Activated naive CD4-positive, alpha-beta T cell treated with anti-CD3 and anti-CD28 coated beads for 36 hours (primary cell): ENCODE measurements at regions of chr10 and their contacts with region 1.

Region 1: GRCh38 chr10:113678690-113679462 is 836 bp upstream of the CASP7 start:
- DNase-seq: peak; percentile 84
- H3K4me3 Mint-ChIP-seq: peak overlapping the region; percentile 83
- H3K27ac Mint-ChIP-seq: peak overlapping the region; percentile 68
- H3K4me1 Mint-ChIP-seq: peaks cover 39% of the 10 kb centered on the region
- H3K27me3 Mint-ChIP-seq: peaks cover 3% of the 10 kb centered on the region

Region 2: DNA sequence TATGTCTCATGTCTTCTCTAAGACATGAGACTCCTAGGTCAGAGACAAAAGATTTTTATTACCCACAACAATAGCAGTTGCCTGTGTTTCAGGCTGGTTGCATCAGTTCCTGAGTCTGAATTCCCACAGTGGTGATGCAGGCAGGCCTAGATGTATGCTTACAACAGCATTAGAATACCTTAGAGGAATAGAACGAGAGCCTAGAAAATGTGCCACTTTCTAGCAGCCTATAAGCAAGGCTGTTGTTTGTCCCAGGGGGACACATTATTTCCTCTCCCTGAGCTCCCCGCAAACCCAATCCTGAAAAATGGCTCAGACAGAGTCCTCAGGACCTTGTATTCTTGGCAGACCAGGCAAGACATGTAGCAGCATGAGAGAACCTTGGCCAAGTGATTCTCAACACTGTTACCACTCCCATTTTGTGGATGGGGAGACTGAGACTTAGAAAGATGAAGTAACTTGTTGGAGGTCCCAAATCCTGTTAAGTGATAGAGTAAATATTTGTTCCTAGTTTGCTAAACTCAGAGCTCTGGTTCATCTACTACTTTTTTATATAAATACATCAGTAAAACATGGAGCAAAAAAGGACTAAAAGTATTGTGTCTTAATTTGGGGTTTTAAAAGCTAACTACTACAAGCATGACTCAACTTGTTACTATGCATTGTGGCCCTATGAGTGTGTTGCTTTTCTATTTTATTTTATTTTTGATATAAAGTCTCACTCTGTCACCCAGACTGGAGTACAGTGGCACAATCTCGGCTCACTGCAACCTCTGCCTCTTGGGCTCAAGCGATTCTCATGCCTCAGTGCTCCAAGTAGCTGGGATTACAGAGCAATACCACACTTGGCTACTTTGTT is 1217.6 kb before region 1 on chr10:
- CTCF ChIA-PET with region 1: no interaction called
- intact Hi-C with region 1: loop called (anchors 5 kb)
- DNase-seq: peak; percentile 90
- H3K4me3 Mint-ChIP-seq: no peak overlapping the region
- H3K27ac Mint-ChIP-seq: peak overlapping the region; percentile 95
- H3K4me1 Mint-ChIP-seq: peaks cover 23% of the 10 kb centered on the region
- H3K27me3 Mint-ChIP-seq: no peaks in the 10 kb centered on the region

Region 3: GRCh38 chr10:112981553-112981952 is 697.3 kb before region 1 on chr10:
- CTCF ChIA-PET with region 1: no interaction called
- intact Hi-C with region 1: loop called (anchors 10 kb)
- DNase-seq: peak; percentile 73
- H3K4me3 Mint-ChIP-seq: no peak overlapping the region
- H3K27ac Mint-ChIP-seq: no peak overlapping the region
- H3K4me1 Mint-ChIP-seq: peaks cover 24% of the 10 kb centered on the region
- H3K27me3 Mint-ChIP-seq: peaks cover 61% of the 10 kb centered on the region

Region 4: GRCh38 chr10:113846036-113846435 is 167.2 kb after region 1 on chr10:
- CTCF ChIA-PET with region 1: no interaction called
- intact Hi-C with region 1: no loop called
- DNase-seq: no peak
- H3K4me3 Mint-ChIP-seq: no peak overlapping the region
- H3K27ac Mint-ChIP-seq: peak overlapping the region; percentile 14
- H3K4me1 Mint-ChIP-seq: peaks cover 15% of the 10 kb centered on the region
- H3K27me3 Mint-ChIP-seq: no peaks in the 10 kb centered on the region

Region 5: DNA sequence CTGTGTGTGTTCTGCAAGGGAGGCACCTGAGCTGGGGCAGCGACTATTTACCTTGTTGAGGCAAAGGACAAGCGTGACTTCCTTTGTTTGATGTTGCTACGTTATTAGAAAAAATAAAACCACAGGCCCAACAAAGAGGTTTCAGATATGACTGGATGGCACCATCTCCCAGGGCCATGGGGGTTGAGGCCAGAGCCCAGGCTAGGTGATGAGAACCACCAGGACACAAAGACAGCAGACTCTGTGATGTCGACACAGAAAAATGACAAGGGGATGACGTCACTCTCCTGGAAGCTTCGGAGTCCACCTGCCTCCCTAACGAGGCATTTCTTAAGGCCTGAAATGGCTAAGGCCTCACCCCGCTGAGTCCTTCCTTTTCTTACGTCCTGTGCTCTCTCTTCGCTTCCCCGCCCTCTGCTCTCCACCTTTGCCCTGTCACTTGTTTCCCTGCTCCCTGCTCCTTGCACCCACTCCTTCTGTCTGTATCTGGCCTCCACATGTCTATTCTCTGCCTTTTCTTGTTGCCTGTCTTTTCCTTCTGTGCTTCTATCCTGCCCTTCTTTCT is 281.8 kb after region 1 on chr10:
- CTCF ChIA-PET with region 1: interaction called, 4 read pairs
- intact Hi-C with region 1: loop called (anchors 1 kb)
- DNase-seq: peak; percentile 39
- H3K4me3 Mint-ChIP-seq: no peak overlapping the region
- H3K27ac Mint-ChIP-seq: no peak overlapping the region
- H3K4me1 Mint-ChIP-seq: peaks cover 37% of the 10 kb centered on the region
- H3K27me3 Mint-ChIP-seq: peaks cover 7% of the 10 kb centered on the region

Region 6: GRCh38 chr10:114083040-114083439 is 404.2 kb after region 1 on chr10:
- CTCF ChIA-PET with region 1: interaction called, 3 read pairs
- intact Hi-C with region 1: loop called (anchors 5 kb)
- DNase-seq: peak; percentile 16
- H3K4me3 Mint-ChIP-seq: no peak overlapping the region
- H3K27ac Mint-ChIP-seq: no peak overlapping the region
- H3K4me1 Mint-ChIP-seq: no peaks in the 10 kb centered on the region
- H3K27me3 Mint-ChIP-seq: peaks cover 5% of the 10 kb centered on the region

Region 7: DNA sequence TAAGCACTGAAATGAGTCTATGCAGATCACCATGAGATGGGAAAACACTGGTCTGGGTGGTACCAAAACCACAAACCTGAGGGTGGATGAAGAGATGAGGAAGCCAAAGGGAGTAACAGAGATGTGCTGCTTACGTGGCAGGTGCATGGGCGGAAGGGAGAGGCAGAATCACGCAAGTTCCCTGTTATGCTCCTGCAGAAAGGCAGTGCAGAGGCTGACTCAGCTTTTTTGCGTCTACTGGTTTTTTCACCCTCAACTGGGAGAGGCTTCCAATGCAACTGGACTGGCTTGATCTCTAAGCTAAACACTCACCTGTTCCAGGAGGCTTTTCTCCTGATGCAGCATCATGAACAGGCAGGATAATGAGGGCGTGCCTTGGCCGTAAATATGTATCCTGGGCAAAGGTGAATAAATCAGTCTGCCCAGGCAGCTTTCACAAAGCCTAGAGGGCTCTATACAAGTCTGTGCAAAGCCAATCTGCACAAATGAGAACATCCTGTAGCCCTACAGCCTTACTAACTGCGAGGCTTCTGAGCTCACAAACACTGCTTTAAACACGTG is 820.8 kb after region 1 on chr10:
- CTCF ChIA-PET with region 1: no interaction called
- intact Hi-C with region 1: loop called (anchors 5 kb)
- DNase-seq: peak; percentile 95
- H3K4me3 Mint-ChIP-seq: peak overlapping the region; percentile 56
- H3K27ac Mint-ChIP-seq: peak overlapping the region; percentile 96
- H3K4me1 Mint-ChIP-seq: peaks cover 87% of the 10 kb centered on the region
- H3K27me3 Mint-ChIP-seq: no peaks in the 10 kb centered on the region

Region 8: DNA sequence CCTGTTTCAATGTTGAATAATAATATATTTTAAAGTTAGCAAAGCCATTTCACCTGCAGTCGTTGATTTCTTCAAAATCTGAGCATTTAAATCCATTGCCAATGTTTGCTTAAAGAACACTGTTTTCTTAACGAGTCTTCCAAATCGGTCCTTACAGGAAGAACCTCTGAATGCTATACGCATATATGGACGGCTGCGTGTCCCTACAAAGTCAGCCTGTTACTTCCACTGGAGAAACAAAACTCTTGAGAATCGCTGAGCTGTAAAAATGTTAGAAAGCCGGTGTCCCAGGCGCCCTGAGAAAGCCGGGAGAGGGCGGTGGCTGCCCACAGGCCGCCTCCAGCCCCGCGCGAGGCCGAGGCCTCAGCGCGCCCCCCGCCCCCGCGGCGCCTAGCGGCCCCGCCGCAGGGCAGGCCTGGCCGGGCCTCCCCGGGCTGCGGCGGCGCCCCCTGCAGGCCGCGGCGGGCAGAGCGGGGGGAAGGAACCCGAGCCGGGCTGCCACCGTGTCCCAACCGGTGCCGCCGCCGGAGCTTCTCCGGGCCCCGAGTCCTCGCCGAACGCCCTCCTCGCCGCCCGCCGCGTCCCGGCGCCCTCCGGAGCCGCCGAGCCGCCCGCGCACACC is 1142.5 kb after region 1 on chr10 and contains the start of gene FHIP2A:
- CTCF ChIA-PET with region 1: no interaction called
- intact Hi-C with region 1: loop called (anchors 2 kb)
- DNase-seq: peak; percentile 80
- H3K4me3 Mint-ChIP-seq: peak within 1 kb of the TSS; percentile 89
- H3K27ac Mint-ChIP-seq: peak within 1 kb of the TSS; percentile 83
- H3K4me1 Mint-ChIP-seq: peaks cover 29% of the 10 kb centered on the region
- H3K27me3 Mint-ChIP-seq: no peaks in the 10 kb centered on the region
- total RNA-seq, gene FHIP2A: 8.7 to 11.4 TPM